ENCODE measurements at regions of chr5 and their contacts with region 1.

Region 1: DNA sequence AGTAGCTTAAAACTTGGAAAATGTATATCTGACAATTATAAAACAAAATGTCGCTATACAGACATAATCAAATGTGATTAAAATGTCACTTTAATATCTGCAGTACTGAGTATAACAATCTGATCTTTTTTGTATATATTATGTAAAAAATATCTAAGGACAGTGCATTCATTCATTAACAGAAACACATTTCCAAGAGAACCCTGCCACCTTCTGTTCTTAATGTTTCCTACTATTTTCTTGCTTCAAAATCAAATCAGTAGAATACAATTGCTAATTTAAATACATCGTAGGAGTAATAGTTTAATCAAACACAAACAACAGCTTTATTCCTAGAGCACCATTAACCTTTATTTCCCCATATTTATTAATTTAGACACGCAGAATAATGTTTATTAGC is 142.6 kb upstream of the ST8SIA4 start:
- DNase-seq: peak; percentile 44
- ATAC-seq: peak; percentile 46
- H3K4me3 ChIP-seq: no peak overlapping the region
- H3K27ac ChIP-seq: no peak overlapping the region
- H3K4me1 ChIP-seq: no peaks in the 10 kb centered on the region
- H3K27me3 ChIP-seq: no peaks in the 10 kb centered on the region
- CTCF ChIP-seq: peak; percentile 54

Region 2: GRCh38 chr5:100430268-100431195 is 615.2 kb before region 1 on chr5:
- CTCF ChIA-PET with region 1: no interaction called
- POLR2A ChIA-PET with region 1: no interaction called
- intact Hi-C with region 1: loop called (anchors 1 kb)
- DNase-seq: peak; percentile 71
- ATAC-seq: peak; percentile 75
- H3K4me3 ChIP-seq: no peak overlapping the region
- H3K27ac ChIP-seq: no peak overlapping the region
- H3K4me1 ChIP-seq: no peaks in the 10 kb centered on the region
- H3K27me3 ChIP-seq: no peaks in the 10 kb centered on the region
- CTCF ChIP-seq: peak; percentile 95

Region 3: GRCh38 chr5:100479079-100479688 is 566.5 kb before region 1 on chr5:
- CTCF ChIA-PET with region 1: no interaction called
- POLR2A ChIA-PET with region 1: no interaction called
- intact Hi-C with region 1: loop called (anchors 1 kb)
- DNase-seq: peak; percentile 68
- ATAC-seq: peak; percentile 89
- H3K4me3 ChIP-seq: no peak overlapping the region
- H3K27ac ChIP-seq: no peak overlapping the region
- H3K4me1 ChIP-seq: no peaks in the 10 kb centered on the region
- H3K27me3 ChIP-seq: no peaks in the 10 kb centered on the region
- CTCF ChIP-seq: peak; percentile 88

Region 4: DNA sequence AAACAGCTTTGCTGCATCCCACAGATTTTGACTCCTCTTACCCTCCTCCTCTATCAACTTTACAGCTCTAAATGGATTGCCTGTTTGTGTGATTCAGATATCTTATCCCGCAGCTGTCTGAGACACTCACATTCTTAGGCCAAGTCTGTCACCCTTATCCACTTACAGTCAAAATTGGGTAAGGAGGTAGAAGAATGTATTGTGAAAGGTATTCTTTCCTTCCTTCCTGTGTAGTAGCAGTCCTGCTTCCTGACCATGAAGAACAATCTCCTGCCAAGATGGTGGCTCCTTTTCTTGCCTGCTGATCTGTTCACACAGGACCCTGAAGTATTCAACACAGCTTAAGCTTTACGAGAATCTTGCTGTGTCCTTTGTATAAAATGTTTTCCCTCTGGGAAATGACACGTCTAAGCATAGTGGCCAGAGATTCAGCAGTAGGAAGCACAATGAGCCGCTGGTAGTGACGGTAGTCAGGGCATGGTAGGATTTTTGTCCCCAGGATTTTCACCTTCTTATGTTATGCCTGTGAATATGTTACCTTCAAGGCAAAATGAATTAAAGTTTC is 74.9 kb before region 1 on chr5:
- CTCF ChIA-PET with region 1: no interaction called
- POLR2A ChIA-PET with region 1: no interaction called
- intact Hi-C with region 1: no loop called
- DNase-seq: no peak
- ATAC-seq: no peak
- H3K4me3 ChIP-seq: no peak overlapping the region
- H3K27ac ChIP-seq: no peak overlapping the region
- H3K4me1 ChIP-seq: no peaks in the 10 kb centered on the region
- H3K27me3 ChIP-seq: no peaks in the 10 kb centered on the region
- CTCF ChIP-seq: no peak

Measured in PC-3 (cell line).